ENCODE measurements at regions of chr4 and their contacts with region 1.

Region 1: GRCh38 chr4:158371158-158371557 is 150.5 kb upstream of the RXFP1 start:
- DNase-seq: no peak
- H3K4me3 ChIP-seq: no peak overlapping the region
- H3K27ac ChIP-seq: no peak overlapping the region
- H3K4me1 ChIP-seq: peaks cover 0 to 6% of the 10 kb centered on the region in 2 donors
- H3K27me3 ChIP-seq: no peaks in the 10 kb centered on the region
- CTCF ChIP-seq: no peak

Region 2: DNA sequence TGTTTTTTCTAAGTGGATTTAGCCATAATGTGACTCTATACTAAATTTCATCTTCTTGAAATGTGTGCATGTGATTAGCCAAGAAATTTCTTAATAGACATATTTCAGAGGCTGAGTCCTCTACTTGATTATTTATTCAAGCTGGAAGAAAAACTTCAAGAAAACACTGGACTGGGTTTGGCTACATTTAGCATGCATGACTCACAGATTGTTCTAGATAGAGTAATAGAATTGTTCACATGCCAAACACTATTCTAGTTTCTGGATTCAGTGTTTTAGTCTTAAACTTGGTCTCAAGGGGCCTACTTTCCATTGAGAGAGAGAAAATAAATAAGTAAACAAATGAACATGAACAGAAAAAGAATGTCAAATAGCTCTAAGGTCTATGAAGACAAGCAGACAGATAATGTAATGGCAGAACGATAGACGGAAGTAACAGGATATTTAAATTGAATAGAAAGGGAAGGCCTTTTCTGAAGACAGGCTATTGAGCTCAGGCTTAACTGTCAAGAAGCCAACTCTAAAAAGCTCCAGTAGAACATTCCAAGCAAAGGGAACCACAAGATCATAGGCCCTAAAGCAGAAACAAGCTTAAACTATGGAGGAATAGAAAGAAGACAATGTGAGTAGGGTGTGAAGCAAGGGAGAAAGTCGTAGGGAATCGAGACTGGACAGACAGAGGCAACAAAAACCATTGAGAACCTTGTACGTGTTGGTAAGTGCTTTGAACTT is 56.2 kb before region 1 on chr4:
- intact Hi-C with region 1: loop called (anchors 5 kb)
- DNase-seq: no peak
- H3K4me3 ChIP-seq: no peak overlapping the region
- H3K27ac ChIP-seq: peak overlapping the region; percentile 80 to 85
- H3K4me1 ChIP-seq: peaks cover 0 to 25% of the 10 kb centered on the region in 2 donors
- H3K27me3 ChIP-seq: no peaks in the 10 kb centered on the region
- CTCF ChIP-seq: no peak